ENCODE measurements at regions of chr9 and their contacts with region 1.

Region 1: DNA sequence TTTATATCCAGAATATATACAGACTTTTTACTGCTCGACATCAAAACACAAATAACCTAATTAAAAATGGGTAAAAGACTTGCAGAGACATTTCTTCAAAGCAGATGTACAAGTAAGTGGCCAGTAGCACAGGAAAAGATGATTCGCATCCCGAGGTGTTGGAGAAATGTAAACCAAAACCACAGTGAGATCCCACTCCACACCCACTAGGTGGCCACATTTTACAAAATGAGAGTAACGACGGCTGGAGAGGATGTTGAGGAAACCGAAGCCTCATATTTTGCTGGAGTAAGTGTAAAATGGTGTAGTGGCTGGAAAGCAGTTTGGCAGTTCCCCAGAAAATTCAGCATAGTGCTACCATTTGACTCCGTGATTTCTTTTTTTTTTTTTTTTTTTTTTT is 21.2 kb upstream of the GBGT1 start:
- DNase-seq: peak in 2 of 4 donors; percentile 44 to 68
- ATAC-seq: peak; percentile 92
- H3K4me3 ChIP-seq: no peak overlapping the region
- H3K27ac ChIP-seq: no peak overlapping the region
- H3K4me1 ChIP-seq: peaks cover 0 to 5% of the 10 kb centered on the region in 2 donors
- H3K27me3 ChIP-seq: peaks cover 0 to 50% of the 10 kb centered on the region in 2 donors
- CTCF ChIP-seq: peak; percentile 48 to 55

Region 2: GRCh38 chr9:133327834-133328484 is 143.0 kb after region 1 on chr9:
- intact Hi-C with region 1: loop called in 1 of 2 experiments (anchors 5 kb)
- DNase-seq: no peak
- ATAC-seq: no peak
- H3K4me3 ChIP-seq: no peak overlapping the region
- H3K27ac ChIP-seq: no peak overlapping the region
- H3K4me1 ChIP-seq: no peaks in the 10 kb centered on the region
- H3K27me3 ChIP-seq: peaks cover 0 to 1% of the 10 kb centered on the region in 2 donors
- CTCF ChIP-seq: no peak

Measured in left lung (tissue), 14 donors.